ENCODE measurements at regions of chr12 and their contacts with region 1.

Region 1: DNA sequence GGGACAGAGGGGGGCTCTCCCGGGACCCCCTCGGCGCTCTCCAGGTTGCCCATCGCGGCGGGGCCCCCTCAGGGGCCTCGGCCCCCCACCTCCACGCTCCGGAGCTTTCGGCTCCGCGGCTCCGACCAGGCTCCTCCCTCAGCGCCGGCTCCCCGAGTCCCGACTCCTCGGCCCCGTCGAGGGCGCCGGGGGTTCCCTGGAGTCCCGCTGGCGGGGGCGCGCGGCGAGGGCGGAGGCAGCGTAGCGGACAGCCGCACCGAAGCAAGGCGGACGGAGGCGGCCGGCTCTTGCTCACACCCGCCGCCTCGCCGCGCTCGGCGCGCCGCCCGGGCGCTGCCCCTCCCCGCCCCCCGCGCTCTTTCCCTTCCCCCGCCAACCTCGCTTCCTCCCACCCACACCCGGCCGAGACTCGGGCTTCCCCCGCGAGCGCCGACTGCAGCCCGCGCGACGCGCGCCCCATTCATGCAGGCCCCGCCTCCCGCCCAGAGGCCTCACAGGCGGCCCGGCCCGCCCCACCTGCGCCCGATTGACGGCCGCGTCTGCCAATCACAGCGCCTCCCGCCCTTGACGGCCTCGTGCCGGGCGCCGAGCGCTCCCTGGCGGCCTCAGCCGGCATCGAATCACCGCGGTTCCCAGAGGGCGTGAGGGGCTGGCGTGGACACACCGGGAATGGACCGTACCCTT is at the start of gene FMNL3:
- DNase-seq: peak; percentile 99
- ATAC-seq: peak; percentile 90
- H3K4me3 Mint-ChIP-seq: peak within 1 kb of the TSS; percentile 97
- H3K27ac Mint-ChIP-seq: peak within 1 kb of the TSS; percentile 91
- H3K4me1 Mint-ChIP-seq: peaks cover 45% of the 10 kb centered on the region
- H3K27me3 Mint-ChIP-seq: peaks cover 5% of the 10 kb centered on the region
- CTCF ChIP-seq: no peak
- total RNA-seq, gene FMNL3: 74.7 and 84.3 TPM in 2 replicates

Region 2: GRCh38 chr12:49553512-49554088 is 153.7 kb before region 1 on chr12:
- CTCF ChIA-PET with region 1: no interaction called
- POLR2A ChIA-PET with region 1: no interaction called
- intact Hi-C with region 1: loop called (anchors 5 kb)
- DNase-seq: no peak
- ATAC-seq: peak; percentile 65
- H3K4me3 Mint-ChIP-seq: no peak overlapping the region
- H3K27ac Mint-ChIP-seq: no peak overlapping the region
- H3K4me1 Mint-ChIP-seq: peaks cover 4% of the 10 kb centered on the region
- H3K27me3 Mint-ChIP-seq: peaks cover 13% of the 10 kb centered on the region
- CTCF ChIP-seq: no peak

Region 3: GRCh38 chr12:49636979-49637755 is 70.1 kb before region 1 on chr12:
- CTCF ChIA-PET with region 1: interaction called, 284 read pairs
- POLR2A ChIA-PET with region 1: interaction called, 8 read pairs
- intact Hi-C with region 1: loop called (anchors 1 kb)
- DNase-seq: peak; percentile 22
- ATAC-seq: peak; percentile 94
- H3K4me3 Mint-ChIP-seq: no peak overlapping the region
- H3K27ac Mint-ChIP-seq: peak overlapping the region; percentile 22
- H3K4me1 Mint-ChIP-seq: peaks cover 27% of the 10 kb centered on the region
- H3K27me3 Mint-ChIP-seq: no peaks in the 10 kb centered on the region
- CTCF ChIP-seq: no peak

Region 4: GRCh38 chr12:49662998-49663843 is 44.0 kb before region 1 on chr12:
- CTCF ChIA-PET with region 1: interaction called, 13 read pairs
- POLR2A ChIA-PET with region 1: interaction called, 265 read pairs
- intact Hi-C with region 1: loop called (anchors 1 kb)
- DNase-seq: peak; percentile 48
- ATAC-seq: peak; percentile 83
- H3K4me3 Mint-ChIP-seq: peak overlapping the region; percentile 80
- H3K27ac Mint-ChIP-seq: peak overlapping the region; percentile 94
- H3K4me1 Mint-ChIP-seq: peaks cover 85% of the 10 kb centered on the region
- H3K27me3 Mint-ChIP-seq: no peaks in the 10 kb centered on the region
- CTCF ChIP-seq: no peak

Region 5: DNA sequence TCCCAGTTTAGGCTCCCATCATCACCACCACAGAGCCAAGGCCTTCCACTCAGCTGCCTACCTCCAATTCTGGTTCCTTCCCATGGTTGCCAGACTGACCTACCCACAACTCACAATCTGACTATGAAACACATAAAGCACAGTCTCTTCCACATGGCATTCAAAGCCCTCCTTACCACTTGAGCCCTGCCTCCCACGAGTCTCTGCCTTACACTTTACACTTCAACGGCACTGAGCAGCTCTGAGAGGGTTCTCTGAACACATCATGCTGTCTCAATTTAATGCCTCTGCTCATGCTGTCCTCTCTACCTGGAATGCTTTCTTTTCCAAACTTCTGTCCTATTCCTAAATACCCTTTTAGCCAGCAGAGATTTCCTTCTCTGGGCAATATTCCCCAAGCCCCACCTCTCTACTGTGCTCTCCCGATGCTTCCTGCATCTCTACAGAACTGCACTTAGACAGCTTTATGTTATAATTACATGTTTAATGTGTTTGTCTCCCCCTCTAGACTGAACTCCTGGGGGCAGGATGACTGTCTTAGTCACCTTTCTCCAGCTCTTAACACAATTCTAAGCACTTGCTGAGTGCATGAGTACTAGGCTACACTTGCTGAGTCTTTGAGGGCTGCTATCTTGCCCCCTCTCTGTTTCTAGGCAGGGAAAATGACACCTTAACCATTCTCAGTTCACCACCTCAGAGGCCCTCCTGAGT is 23.5 kb before region 1 on chr12:
- CTCF ChIA-PET with region 1: interaction called, 3 read pairs
- POLR2A ChIA-PET with region 1: interaction called, 12 read pairs
- intact Hi-C with region 1: no loop called
- DNase-seq: no peak
- ATAC-seq: no peak
- H3K4me3 Mint-ChIP-seq: no peak overlapping the region
- H3K27ac Mint-ChIP-seq: peak overlapping the region; percentile 42
- H3K4me1 Mint-ChIP-seq: peaks cover 72% of the 10 kb centered on the region
- H3K27me3 Mint-ChIP-seq: no peaks in the 10 kb centered on the region
- CTCF ChIP-seq: no peak

Region 6: DNA sequence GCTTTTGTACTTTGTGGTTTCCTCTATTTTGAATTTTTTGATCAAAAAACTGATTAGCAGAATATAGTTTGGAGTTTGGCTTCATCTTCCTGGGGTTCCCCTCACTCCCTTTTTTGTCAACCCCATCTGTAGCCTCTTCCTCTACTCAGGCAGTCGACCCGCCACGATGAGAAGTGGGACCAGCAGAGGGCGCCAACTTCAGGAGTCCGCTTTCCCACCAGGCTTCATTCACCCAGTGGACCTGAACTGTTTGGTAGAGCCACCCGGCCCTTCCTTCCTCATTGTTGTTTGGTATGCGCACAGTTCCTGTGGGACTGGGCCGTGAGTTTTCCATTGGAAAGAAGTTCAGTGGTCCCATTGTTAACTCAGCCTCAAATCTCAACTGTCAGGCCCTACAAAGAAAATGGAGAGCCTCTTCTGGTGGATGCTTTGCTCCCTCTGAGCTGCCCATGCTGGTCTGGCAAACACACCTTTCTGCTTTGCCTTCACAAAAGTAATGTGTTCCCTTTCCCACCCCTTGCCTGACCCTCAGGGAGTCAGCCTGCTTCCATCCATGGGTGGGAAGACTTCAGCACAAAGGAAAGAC is 55.8 kb after region 1 on chr12:
- CTCF ChIA-PET with region 1: no interaction called
- POLR2A ChIA-PET with region 1: no interaction called
- intact Hi-C with region 1: no loop called
- DNase-seq: peak; percentile 59
- ATAC-seq: peak; percentile 83
- H3K4me3 Mint-ChIP-seq: no peak overlapping the region
- H3K27ac Mint-ChIP-seq: peak overlapping the region; percentile 79
- H3K4me1 Mint-ChIP-seq: peaks cover 25% of the 10 kb centered on the region
- H3K27me3 Mint-ChIP-seq: no peaks in the 10 kb centered on the region
- CTCF ChIP-seq: no peak

Region 7: GRCh38 chr12:49828133-49829091 is 121.1 kb after region 1 on chr12 and contains the start of gene NCKAP5L:
- CTCF ChIA-PET with region 1: no interaction called
- POLR2A ChIA-PET with region 1: no interaction called
- intact Hi-C with region 1: loop called (anchors 1 kb)
- DNase-seq: peak; percentile 87
- ATAC-seq: peak; percentile 97
- H3K4me3 Mint-ChIP-seq: peak within 1 kb of the TSS; percentile 98
- H3K27ac Mint-ChIP-seq: peak within 1 kb of the TSS; percentile 95
- H3K4me1 Mint-ChIP-seq: peaks cover 37% of the 10 kb centered on the region
- H3K27me3 Mint-ChIP-seq: no peaks in the 10 kb centered on the region
- CTCF ChIP-seq: no peak
- total RNA-seq, gene NCKAP5L: 7.2 and 9.1 TPM in 2 replicates

Region 8: DNA sequence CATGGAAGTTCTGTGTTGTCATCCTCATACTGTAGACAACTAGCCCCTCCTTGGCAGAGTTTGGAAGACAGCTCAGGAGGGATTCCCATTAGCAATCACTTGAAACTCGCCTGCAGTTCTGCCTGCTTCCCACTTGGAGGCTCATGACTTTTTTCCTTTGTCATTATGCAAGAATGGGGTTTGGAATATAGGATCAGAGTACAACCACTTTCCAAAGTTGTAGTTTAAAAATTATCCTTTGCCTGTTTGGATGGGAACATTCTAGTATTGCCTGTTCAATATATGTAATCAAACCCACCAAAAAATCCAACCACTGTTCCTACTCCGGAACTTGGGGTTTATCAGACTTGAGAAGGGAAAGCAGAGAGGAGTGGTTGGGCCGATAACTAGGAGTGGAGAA is 394.4 kb after region 1 on chr12:
- CTCF ChIA-PET with region 1: no interaction called
- POLR2A ChIA-PET with region 1: no interaction called
- intact Hi-C with region 1: no loop called
- DNase-seq: no peak
- ATAC-seq: no peak
- H3K4me3 Mint-ChIP-seq: no peak overlapping the region
- H3K27ac Mint-ChIP-seq: no peak overlapping the region
- H3K4me1 Mint-ChIP-seq: peaks cover 9% of the 10 kb centered on the region
- H3K27me3 Mint-ChIP-seq: no peaks in the 10 kb centered on the region
- CTCF ChIP-seq: no peak

Measured in activated B cell treated with CpG ODN at 0.5 μM for 24 hours (primary cell).